Astrocyte of the cerebellum (primary cell): ENCODE measurements at regions of chr7 and their contacts with region 1.

Region 1: GRCh38 chr7:16982640-16983350 is 101.0 kb upstream of the AGR3 start:
- DNase-seq: peak; percentile 28
- H3K4me3 ChIP-seq: no peak overlapping the region
- CTCF ChIP-seq: peak; percentile 94

Region 2: DNA sequence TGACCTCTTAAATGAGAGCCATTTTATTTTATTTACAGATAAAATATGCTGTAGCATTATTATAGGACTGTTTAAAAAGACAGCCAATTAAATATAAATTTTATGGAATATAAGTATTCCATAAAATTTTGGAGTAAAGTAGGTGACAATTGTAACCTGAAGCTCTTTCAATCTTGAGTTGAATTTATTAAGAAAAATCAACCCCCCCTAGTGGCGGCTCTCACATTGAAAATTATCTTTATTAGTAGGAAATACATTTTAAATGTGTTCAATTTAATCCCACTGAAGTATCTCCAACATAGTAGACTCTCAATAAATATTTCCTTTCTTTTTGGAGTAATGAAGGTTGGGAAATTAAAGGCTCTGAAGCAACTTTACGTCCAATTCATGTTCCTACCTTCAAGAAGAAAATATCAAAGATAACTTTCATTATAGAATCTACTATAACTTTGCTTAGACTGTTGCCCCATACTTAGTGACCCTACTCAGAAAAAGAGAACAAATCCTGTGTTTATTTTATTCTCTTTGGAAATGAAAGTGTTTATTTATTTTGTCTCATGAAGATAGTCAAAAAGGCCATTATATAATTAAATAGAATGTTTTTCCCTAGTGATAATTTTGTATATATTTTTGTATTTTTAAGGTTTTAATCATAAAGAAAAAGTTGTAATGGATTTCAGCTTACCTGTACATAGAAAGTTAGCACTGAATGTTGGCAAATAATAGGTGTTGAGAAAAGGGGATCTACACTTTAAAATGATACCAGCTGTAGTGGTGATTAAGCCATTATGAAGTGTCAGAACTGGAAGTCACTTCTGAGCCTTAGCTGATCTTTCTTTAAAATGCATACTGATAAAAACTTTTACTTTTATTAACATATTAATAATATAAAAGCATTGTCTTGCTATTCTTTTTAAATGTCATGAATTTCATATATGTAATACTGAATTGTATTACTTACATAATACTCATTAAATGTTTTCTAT is 319.0 kb after region 1 on chr7:
- in situ Hi-C with region 1: loop called (anchors 25 kb)
- DNase-seq: no peak
- H3K4me3 ChIP-seq: peak overlapping the region; percentile 92
- CTCF ChIP-seq: peak; percentile 25